ENCODE measurements at regions of chr2 and their contacts with region 1.

Region 1: GRCh38 chr2:164737612-164738081 is 104.0 kb downstream of the COBLL1 start:
- DNase-seq: peak; percentile 61 to 69
- H3K4me3 ChIP-seq: no peak overlapping the region
- H3K27ac ChIP-seq: no peak overlapping the region
- H3K4me1 ChIP-seq: peaks cover 15 to 20% of the 10 kb centered on the region in 2 donors
- H3K27me3 ChIP-seq: no peaks in the 10 kb centered on the region
- CTCF ChIP-seq: peak; percentile 49 to 88 (median 67)
- POLR2A ChIP-seq: no peak

Region 2: DNA sequence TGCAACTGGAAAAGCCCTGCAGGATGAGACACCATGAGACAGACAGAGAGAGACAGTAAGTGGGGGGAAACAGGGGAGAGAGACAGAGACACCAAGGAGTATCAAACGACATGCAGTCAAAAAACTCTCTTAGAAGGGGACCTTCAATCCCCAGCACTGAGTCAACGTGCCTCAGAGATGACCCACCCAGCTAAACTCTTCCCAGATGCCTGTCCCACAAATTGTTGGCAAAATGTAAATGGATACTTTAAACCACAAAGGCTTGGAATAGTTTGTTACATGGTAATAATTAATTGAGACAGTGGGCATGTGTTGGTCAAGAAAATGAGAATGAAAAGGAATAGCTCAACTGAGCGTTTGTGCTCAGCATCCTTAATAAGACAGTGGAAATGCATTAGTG is 214.6 kb before region 1 on chr2:
- intact Hi-C with region 1: no loop called
- DNase-seq: no peak
- H3K4me3 ChIP-seq: no peak overlapping the region
- H3K27ac ChIP-seq: no peak overlapping the region
- H3K4me1 ChIP-seq: no peaks in the 10 kb centered on the region
- H3K27me3 ChIP-seq: no peaks in the 10 kb centered on the region
- CTCF ChIP-seq: no peak
- POLR2A ChIP-seq: no peak

Region 3: GRCh38 chr2:164697674-164698461 is 39.8 kb before region 1 on chr2:
- intact Hi-C with region 1: no loop called
- DNase-seq: no peak
- H3K4me3 ChIP-seq: no peak overlapping the region
- H3K27ac ChIP-seq: no peak overlapping the region
- H3K4me1 ChIP-seq: no peaks in the 10 kb centered on the region
- H3K27me3 ChIP-seq: no peaks in the 10 kb centered on the region
- CTCF ChIP-seq: peak in 5 of 6 experiments; percentile 9 to 57 (median 46)
- POLR2A ChIP-seq: no peak

Region 4: GRCh38 chr2:164917296-164917903 is 179.8 kb after region 1 on chr2:
- intact Hi-C with region 1: loop called (anchors 5 kb)
- DNase-seq: peak; percentile 64 to 73
- H3K4me3 ChIP-seq: no peak overlapping the region
- H3K27ac ChIP-seq: no peak overlapping the region
- H3K4me1 ChIP-seq: peaks cover 9 to 15% of the 10 kb centered on the region in 2 donors
- H3K27me3 ChIP-seq: no peaks in the 10 kb centered on the region
- CTCF ChIP-seq: peak in 5 of 6 experiments; percentile 38 to 81 (median 64)
- POLR2A ChIP-seq: no peak

Region 5: DNA sequence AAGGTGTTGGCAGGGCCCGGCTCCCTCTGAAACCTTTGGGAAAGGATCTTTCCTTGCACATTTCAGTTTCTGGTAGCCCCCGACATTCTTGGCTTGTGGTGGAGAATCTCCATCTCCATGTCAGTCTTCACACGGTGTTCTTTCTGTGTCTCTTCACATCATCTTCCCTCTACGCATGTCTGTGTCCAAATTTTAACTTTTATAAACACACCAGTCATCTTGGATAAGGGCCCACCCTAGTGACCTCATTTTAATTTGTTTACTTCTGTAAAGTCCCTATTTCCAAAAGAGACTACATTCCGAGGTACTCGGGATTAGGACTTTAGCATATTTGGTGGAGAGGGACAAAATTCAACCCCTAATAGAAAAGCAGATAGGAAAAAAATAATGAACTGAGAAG is 918.0 kb after region 1 on chr2:
- intact Hi-C with region 1: no loop called
- DNase-seq: no peak
- H3K4me3 ChIP-seq: no peak overlapping the region
- H3K27ac ChIP-seq: no peak overlapping the region
- H3K4me1 ChIP-seq: no peaks in the 10 kb centered on the region
- H3K27me3 ChIP-seq: no peaks in the 10 kb centered on the region
- CTCF ChIP-seq: no peak
- POLR2A ChIP-seq: no peak

Measured in thyroid gland (tissue), 4 donors.